ENCODE measurements at regions of chr1 and their contacts with region 1.

Region 1: GRCh38 chr1:231421993-231422764 is at the start of gene EGLN1:
- DNase-seq: peak; percentile 78
- H3K4me3 Mint-ChIP-seq: peak within 1 kb of the TSS; percentile 93
- H3K27ac Mint-ChIP-seq: peak within 1 kb of the TSS; percentile 92
- H3K4me1 Mint-ChIP-seq: peaks cover 51% of the 10 kb centered on the region
- H3K27me3 Mint-ChIP-seq: peaks cover 18% of the 10 kb centered on the region
- total RNA-seq, gene EGLN1: 17.1 and 17.8 TPM in 2 replicates

Region 2: GRCh38 chr1:230867903-230868735 is 554.1 kb before region 1 on chr1 and contains the start of gene C1orf198:
- intact Hi-C with region 1: loop called (anchors 10 kb)
- DNase-seq: peak; percentile 59
- H3K4me3 Mint-ChIP-seq: peak within 1 kb of the TSS; percentile 87
- H3K27ac Mint-ChIP-seq: peak within 1 kb of the TSS; percentile 80
- H3K4me1 Mint-ChIP-seq: peaks cover 28% of the 10 kb centered on the region
- H3K27me3 Mint-ChIP-seq: peaks cover 39% of the 10 kb centered on the region
- total RNA-seq, gene C1orf198: 14.1 and 14.6 TPM in 2 replicates

Region 3: DNA sequence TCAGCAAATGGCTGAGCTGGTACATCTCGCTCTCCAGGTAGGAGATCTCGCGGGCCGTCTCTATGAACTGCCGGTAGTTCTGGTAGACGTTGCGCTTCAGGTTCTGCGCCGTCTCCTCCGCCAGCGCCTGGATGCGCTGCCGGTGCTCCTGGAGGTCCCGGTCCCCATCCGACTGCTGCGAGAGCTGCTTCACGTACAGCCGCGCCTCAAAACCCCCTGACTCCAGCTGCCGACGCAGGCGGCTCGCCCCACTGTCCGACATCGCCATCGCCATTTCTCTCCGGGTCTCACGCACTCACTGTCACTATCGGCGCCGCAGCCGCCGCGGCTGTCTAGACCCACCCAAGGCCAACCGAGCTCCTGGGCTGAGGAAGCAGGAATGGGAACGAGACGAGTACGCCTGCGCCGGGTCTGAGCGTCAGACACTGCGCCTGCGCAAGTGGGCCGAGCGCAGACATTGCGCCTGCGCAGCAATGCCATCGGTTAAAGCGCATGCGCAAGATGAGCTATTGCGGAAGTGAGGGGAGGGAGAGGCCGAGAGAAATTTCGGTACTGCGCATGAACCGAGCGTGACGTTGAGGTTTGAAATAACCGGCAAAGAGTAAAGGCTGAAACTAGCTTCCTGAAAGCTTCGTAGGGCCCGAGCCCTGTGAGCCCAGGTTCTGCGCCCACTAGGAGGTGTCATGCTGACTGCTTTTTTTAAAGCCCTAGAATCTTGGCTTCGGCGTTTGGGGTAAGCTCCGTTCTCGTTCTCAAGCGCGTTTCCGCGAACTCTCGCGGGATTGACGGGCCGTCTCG is 84.5 kb before region 1 on chr1 and contains the start of gene EXOC8:
- intact Hi-C with region 1: loop called (anchors 1 kb)
- DNase-seq: peak; percentile 99
- H3K4me3 Mint-ChIP-seq: peak within 1 kb of the TSS; percentile 98
- H3K27ac Mint-ChIP-seq: peak within 1 kb of the TSS; percentile 100
- H3K4me1 Mint-ChIP-seq: peaks cover 62% of the 10 kb centered on the region
- H3K27me3 Mint-ChIP-seq: peaks cover 3% of the 10 kb centered on the region
- total RNA-seq, gene EXOC8: 14.4 and 15.6 TPM in 2 replicates

Region 4: GRCh38 chr1:231376875-231377549 is 45.2 kb before region 1 on chr1:
- intact Hi-C with region 1: loop called (anchors 1 kb)
- DNase-seq: peak; percentile 13
- H3K4me3 Mint-ChIP-seq: peak overlapping the region; percentile 6
- H3K27ac Mint-ChIP-seq: peak overlapping the region; percentile 78
- H3K4me1 Mint-ChIP-seq: peaks cover 43% of the 10 kb centered on the region
- H3K27me3 Mint-ChIP-seq: no peaks in the 10 kb centered on the region

Region 5: DNA sequence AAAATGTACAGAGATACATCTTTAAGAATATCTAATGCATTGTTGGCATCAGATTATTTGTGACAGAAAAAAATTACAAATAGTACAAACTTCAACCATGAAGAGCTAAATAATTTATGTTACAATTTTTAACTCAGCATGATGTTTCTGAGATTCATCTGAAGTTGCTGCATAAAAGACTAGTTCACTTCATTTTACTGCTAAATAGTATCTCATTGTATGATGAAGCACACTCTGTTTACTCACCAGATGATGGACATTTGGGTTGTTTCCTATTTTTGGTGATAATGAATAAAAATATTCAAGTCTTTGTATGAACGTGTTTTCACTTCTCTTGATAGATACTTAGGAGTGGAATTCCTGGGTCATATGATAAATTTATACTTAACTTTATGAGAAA is 20.7 kb before region 1 on chr1:
- intact Hi-C with region 1: loop called (anchors 2 kb)
- DNase-seq: no peak
- H3K4me3 Mint-ChIP-seq: no peak overlapping the region
- H3K27ac Mint-ChIP-seq: no peak overlapping the region
- H3K4me1 Mint-ChIP-seq: peaks cover 12% of the 10 kb centered on the region
- H3K27me3 Mint-ChIP-seq: no peaks in the 10 kb centered on the region

Region 6: DNA sequence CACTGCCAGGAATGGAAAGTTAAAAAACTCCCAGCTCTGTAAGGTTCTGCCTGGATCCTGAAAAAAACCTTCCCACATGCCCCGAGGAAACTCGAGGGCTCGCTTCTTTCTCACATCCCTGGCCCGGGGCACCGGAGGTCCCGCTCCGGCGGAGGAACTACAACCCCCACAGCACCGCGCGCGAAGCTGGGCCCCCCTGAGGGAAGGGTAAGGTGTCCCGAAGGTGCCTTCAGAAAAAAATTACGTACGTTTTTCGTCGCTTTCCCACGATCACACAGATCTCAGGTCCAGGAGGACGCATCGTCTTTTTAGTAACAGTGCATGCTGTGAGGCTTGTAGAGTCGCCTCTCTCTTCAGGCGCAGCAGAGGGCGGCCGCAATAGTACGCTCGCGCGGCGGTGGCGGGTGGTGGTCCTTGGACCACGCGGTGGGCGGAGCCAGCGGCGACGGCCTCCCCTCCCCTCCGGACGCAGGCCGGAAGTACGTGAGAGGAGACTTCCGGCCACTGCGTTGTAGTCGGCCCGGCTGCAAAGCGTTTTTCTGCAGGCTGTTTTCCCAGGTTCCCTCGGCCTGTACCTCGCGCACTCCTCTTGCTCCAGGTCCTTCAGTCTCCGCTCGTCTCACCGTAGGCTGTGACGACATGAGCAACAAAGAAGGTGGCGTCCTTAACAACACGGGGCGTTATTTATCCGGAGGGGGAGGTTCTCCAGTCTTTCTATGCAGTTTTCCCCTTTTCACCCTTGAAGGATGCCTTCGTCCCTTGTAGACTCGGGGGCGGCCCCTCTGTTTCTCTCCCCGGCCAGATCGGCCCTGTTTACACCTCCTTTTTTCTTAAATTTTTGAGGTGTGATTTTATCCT is 106.2 kb after region 1 on chr1 and contains the start of gene TSNAX:
- intact Hi-C with region 1: loop called (anchors 1 kb)
- DNase-seq: peak; percentile 88
- H3K4me3 Mint-ChIP-seq: peak within 1 kb of the TSS; percentile 93
- H3K27ac Mint-ChIP-seq: peak within 1 kb of the TSS; percentile 98
- H3K4me1 Mint-ChIP-seq: peaks cover 38% of the 10 kb centered on the region
- H3K27me3 Mint-ChIP-seq: no peaks in the 10 kb centered on the region
- total RNA-seq, gene TSNAX: 42.7 and 47.1 TPM in 2 replicates

Region 7: GRCh38 chr1:231883382-231883781 is 461.2 kb after region 1 on chr1:
- intact Hi-C with region 1: no loop called
- DNase-seq: no peak
- H3K4me3 Mint-ChIP-seq: no peak overlapping the region
- H3K27ac Mint-ChIP-seq: no peak overlapping the region
- H3K4me1 Mint-ChIP-seq: no peaks in the 10 kb centered on the region
- H3K27me3 Mint-ChIP-seq: no peaks in the 10 kb centered on the region

Measured in activated T-helper 1 cell treated with anti-CD3 and anti-CD28 coated beads, Interleukin-12 subunit alpha, Interleukin-12 subunit beta, Interleukin-2, Interleukin-4 antibody, amounts not matched to agents 30 ng/mL and 10 ng/mL and 1 ng/mL, durations not matched to agents 14 hours and 24 hours and 36 hours (primary cell).